AG04450 (cell line): ENCODE measurements at regions of chr3 and their contacts with region 1.

Region 1: DNA sequence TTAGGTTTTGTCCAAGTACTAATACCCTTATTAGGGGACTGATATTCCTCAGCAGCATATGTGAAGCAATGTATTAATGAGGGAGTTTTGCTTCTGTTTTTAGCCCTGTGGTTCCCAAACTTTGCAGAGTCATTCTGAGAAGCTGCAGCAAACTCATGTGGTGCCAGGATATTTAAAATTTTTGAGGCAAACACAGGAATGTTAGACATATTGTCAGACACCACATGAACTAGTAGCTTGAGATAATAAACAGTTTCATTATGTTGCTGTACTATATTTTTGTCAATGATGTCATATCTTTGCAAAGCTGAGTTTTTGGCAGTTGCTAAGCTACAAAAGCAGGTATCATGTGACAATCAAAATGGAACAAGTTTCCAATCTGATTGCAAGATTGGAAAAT is 36.6 kb downstream of the ATP6V1A start:
- DNase-seq: peak; percentile 91
- H3K4me3 ChIP-seq: no peak overlapping the region
- H3K27ac ChIP-seq: no peak overlapping the region
- H3K27me3 ChIP-seq: no peaks in the 10 kb centered on the region
- CTCF ChIP-seq: no peak

Region 2: DNA sequence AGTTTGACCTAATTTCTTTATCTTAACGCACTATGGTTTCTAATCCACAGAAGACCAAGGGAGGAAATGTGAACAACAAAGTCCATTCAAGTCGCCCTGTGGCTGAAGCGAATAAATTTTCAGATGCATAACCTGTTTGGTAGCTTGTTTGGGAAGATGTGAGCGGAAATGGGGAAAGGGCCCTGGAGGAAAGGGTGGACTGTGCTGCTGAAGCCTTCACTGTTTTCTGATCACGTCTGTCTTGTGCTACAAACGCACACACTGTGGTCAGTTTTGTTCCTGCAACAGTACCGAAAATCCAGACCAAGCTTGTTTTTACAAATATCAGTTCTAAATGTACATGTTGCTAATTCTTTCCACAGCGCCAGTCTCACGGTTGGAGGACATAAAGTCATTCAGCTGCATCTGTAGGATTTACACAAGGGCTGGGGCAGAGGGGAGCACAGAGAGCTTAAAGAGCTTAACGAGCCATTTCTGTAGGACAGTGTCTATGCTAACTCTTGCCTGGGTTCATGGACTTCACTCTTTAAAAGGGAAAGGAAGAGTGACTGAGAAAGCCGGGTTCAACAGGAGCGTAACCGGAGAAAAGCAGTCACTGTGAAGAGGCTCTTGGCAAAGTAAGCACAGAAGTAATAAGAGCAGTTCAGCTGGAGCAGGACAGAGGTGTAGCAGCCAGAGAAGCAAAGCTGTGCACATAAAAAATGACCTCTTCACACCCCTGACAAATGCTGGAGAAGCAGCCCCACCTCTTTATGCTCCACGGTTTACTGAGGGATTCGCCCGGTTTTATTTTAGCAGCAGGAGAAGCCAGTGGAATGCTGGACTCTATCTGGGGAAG is 153.7 kb before region 1 on chr3:
- CTCF ChIA-PET with region 1: no interaction called
- POLR2A ChIA-PET with region 1: no interaction called
- DNase-seq: no peak
- H3K4me3 ChIP-seq: no peak overlapping the region
- H3K27ac ChIP-seq: no peak overlapping the region
- H3K27me3 ChIP-seq: peaks cover 5% of the 10 kb centered on the region
- CTCF ChIP-seq: no peak

Region 3: DNA sequence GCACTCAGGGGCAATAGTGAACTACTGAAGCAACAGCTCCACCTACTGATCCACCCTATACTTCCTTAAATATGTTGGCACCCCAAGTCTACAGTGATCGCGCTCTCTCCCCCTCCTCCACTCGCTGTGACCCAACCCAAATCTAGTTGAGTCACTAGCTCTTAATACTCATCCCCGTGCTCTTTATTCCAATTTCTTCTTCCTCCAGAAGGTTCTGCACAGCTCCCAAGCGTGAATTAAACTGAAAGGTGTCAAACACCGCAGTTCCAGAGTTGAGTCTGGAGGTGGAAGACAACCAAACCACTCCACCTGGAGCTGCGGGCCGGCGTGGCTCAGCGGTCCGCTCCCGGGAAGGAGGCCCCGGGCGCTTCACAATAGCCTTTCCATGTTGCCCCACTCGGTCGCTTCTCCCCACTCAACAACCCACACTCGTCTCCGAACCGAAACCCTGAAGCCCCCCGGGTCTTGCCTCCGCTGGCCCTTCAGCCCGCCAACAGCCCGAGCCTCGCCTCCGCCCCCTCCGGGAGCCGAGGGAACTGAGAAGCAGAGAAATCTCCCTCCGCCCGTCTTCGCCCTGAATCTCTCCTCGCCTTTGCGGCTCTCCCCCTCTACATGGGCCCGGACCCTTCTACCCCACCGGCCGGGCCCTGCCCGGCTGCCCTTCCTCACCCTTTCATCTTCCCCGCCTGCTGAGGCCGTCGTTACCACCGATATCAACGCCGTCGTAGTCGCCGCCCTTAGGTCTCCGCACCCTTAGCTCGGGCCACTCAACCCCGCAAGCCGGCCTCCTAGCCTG is 38.0 kb before region 1 on chr3:
- CTCF ChIA-PET with region 1: interaction called, 8 read pairs
- POLR2A ChIA-PET with region 1: interaction called, 10 read pairs
- DNase-seq: peak; percentile 65
- H3K4me3 ChIP-seq: peak overlapping the region; percentile 98
- H3K27ac ChIP-seq: peak overlapping the region; percentile 96
- H3K27me3 ChIP-seq: no peaks in the 10 kb centered on the region
- CTCF ChIP-seq: peak; percentile 70

Region 4: DNA sequence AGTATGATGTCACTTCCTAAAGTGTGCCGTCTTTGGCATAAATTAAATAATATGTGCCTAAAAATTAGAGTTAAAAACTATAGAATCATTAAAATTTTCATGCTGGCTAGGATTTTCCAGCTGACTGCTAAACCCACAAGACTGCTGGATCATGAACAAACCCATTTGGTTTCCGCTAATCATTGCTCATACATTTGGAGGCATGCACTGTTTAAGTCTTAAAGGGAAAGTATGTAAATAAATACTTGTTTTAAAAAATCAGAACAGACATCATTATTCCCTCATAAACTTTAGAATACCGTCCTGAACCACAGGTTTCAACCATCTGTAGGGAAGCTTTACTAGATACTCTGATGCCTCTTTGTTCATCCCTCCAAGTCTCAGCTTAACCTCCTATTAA is 10.1 kb before region 1 on chr3:
- CTCF ChIA-PET with region 1: no interaction called
- POLR2A ChIA-PET with region 1: interaction called, 13 read pairs
- DNase-seq: peak; percentile 74
- H3K4me3 ChIP-seq: no peak overlapping the region
- H3K27ac ChIP-seq: no peak overlapping the region
- H3K27me3 ChIP-seq: no peaks in the 10 kb centered on the region
- CTCF ChIP-seq: no peak